ENCODE measurements at regions of chr6 and their contacts with region 1.

Region 1: DNA sequence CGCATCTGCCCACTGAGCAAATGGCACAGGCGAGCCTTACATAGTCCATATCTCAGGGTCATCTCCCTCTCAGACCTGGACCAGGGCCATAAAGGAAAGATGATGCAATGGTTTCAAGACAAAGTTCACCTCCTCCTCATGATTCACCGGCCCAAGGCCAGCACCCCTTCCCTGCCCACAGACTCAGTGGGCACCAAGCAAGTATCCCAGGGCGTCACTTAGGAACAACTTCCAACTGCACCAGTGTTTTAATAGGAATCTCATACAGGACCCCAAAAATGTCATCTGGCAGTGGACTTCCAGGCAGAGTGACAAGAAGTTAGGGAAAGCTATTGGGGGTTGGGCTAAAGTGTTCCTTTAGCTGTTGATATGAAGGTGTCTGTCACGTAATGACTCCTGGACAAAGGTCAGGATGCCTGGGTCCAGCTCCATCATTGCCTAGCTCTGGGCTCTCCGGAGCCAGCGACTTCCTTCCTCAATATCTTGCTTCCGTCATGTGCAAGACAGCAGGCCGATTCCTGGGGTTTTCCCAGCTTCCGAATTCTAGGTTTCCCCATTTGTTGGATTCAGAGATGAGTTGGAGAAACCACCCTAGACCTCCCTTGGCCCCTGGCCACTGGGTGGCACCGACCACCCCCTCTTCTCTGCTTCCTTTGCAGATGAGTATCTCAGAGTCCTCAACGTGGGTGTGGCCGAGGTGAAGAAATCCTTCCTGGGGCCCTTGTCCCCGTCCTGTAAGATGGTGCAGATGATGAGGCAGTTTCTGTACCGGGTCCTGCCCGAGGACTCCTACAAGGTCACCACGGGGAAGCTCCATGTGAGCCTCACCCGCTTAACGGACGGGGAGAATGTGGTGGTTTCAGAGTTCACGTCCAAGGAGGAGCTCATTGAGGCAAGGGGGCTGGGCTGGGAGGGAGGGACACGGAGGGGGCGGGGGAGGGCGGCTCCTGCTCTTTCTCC is 21.1 kb downstream of the PNPLA1 start:
- DNase-seq: peak in 1 of 6 donors; percentile 48
- ATAC-seq: peak in 3 of 4 donors; percentile 39 to 67 (median 50)
- H3K4me3 ChIP-seq: no peak overlapping the region
- H3K27ac ChIP-seq: no peak overlapping the region
- H3K4me1 ChIP-seq: no peaks in the 10 kb centered on the region
- H3K27me3 ChIP-seq: no peaks in the 10 kb centered on the region
- CTCF ChIP-seq: no peak

Region 2: DNA sequence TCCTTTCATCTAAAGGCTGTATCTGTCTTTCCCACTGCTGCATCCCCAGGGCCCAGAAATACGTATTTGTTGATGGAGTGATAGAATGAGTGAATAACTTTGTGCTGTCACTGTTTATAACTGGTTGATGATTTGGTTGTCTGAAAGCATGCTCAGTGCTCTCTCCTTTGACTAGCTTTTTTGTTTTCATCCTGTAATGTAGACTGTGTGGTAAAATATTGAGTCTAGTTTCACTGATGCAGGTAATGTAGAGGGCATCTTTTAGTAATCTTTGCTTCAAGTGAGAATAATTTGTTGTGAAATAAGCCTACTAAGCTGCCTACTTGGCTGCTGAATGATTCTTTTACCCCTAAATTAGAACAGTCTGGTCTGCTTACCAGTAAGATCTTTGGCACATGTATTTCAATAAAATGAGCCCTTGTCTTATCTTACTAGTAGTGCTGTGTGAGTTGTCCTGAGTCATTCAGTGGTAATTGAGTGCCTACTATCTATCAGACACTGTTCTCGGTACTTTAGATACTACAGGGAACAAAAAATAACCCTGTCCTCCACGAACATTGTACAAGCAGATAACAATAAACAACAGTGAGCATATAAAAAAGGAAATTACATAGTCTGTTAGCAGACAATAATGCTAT is 223.4 kb before region 1 on chr6:
- intact Hi-C with region 1: no loop called
- DNase-seq: no peak
- ATAC-seq: peak in 2 of 4 donors; percentile 36 to 44
- H3K4me3 ChIP-seq: no peak overlapping the region
- H3K27ac ChIP-seq: peak overlapping the region in 1 of 4 donors; percentile 36
- H3K4me1 ChIP-seq: peaks cover 14 to 53% (median 34%) of the 10 kb centered on the region in 3 donors
- H3K27me3 ChIP-seq: no peaks in the 10 kb centered on the region
- CTCF ChIP-seq: no peak

Region 3: DNA sequence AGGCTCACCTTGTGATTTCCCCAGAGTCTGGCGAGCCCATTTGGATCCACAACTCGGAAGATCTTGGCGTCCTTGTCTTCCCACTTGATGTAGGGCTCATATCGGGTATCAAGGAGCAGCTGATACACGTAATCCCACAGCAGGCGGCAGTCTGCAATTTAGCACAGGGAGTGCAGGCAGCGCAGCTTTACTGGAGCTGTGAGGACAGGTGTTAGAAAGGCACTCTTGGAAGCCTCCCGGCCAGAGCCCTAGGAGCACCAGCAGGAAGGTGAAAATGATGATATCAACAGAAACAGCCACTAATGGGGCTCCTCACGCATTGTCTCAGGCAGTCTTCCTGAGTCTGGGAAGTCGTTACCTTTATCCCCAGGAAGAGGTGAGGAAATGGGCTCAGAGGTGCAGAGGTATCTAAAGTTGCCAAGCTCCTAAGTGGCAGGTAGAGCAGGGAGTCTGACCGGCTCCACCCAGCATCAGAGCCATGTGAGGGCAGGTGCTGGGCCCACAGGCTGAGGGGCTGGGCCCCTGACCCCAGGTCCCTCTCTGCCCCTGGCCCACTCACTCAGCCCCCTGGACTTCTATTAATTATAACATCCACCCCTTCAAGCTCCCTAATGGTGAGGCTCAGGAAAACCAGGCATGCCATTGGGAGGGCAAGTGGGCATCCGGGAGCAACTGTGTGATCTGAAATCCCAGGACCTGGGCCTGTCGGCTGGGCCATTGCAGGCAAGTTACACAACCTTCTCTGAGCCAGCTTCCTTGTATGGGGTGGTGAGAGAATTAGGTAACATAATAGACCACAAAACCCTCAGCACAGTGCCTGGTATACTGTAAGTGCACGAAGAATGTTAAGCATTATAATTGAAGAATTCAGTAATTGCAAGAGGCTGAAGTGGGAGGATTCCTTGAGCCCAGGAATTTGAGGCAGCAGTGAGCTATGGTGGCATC is 78.3 kb after region 1 on chr6:
- intact Hi-C with region 1: loop called in 1 of 3 experiments (anchors 5 kb)
- DNase-seq: no peak
- ATAC-seq: no peak
- H3K4me3 ChIP-seq: no peak overlapping the region
- H3K27ac ChIP-seq: no peak overlapping the region
- H3K4me1 ChIP-seq: peaks cover 0 to 11% (median 0%) of the 10 kb centered on the region in 3 donors
- H3K27me3 ChIP-seq: no peaks in the 10 kb centered on the region
- CTCF ChIP-seq: no peak